Aorta (tissue), 5 donors: ENCODE measurements at regions of chr1 and their contacts with region 1.

Region 1: GRCh38 chr1:15617175-15617880 is at the start of gene DDI2:
- DNase-seq: peak; percentile 98
- ATAC-seq: peak; percentile 96
- H3K4me3 ChIP-seq: peak within 1 kb of the TSS; percentile 38 to 91
- H3K27ac ChIP-seq: peak within 1 kb of the TSS; percentile 85 to 97
- H3K4me1 ChIP-seq: no peaks in the 10 kb centered on the region
- H3K27me3 ChIP-seq: no peaks in the 10 kb centered on the region
- total RNA-seq, gene DDI2: 24.7 to 29.6 TPM

Region 2: GRCh38 chr1:15526490-15527339 is 90.6 kb before region 1 on chr1 and contains the start of gene DNAJC16:
- intact Hi-C with region 1: loop called in 1 of 2 experiments (anchors 5 kb)
- DNase-seq: peak; percentile 98 to 99
- ATAC-seq: peak; percentile 83
- H3K4me3 ChIP-seq: peak within 1 kb of the TSS; percentile 40 to 80
- H3K27ac ChIP-seq: peak within 1 kb of the TSS in 1 of 2 donors; percentile 74
- H3K4me1 ChIP-seq: no peaks in the 10 kb centered on the region
- H3K27me3 ChIP-seq: no peaks in the 10 kb centered on the region
- total RNA-seq, gene DNAJC16: 18.0 to 19.9 TPM

Region 3: GRCh38 chr1:15684468-15685291 is 67.4 kb after region 1 on chr1:
- intact Hi-C with region 1: loop called in 1 of 2 experiments (anchors 10 kb)
- DNase-seq: peak; percentile 71 to 82
- ATAC-seq: peak; percentile 35
- H3K4me3 ChIP-seq: peak overlapping the region; percentile 77 to 98
- H3K27ac ChIP-seq: peak overlapping the region; percentile 18 to 91
- H3K4me1 ChIP-seq: no peaks in the 10 kb centered on the region
- H3K27me3 ChIP-seq: no peaks in the 10 kb centered on the region